ENCODE measurements at regions of chr9 and their contacts with region 1.

Region 1: GRCh38 chr9:26746357-26747072 is 146.1 kb downstream of the CAAP1 start:
- DNase-seq: no peak
- ATAC-seq: peak; percentile 66

Region 2: GRCh38 chr9:26946753-26947727 is 200.5 kb after region 1 on chr9 and contains the start of gene PLAA:
- intact Hi-C with region 1: no loop called
- DNase-seq: peak; percentile 91 to 92
- ATAC-seq: peak; percentile 99
- total RNA-seq, gene PLAA: 26.8 to 28.8 TPM

Region 3: DNA sequence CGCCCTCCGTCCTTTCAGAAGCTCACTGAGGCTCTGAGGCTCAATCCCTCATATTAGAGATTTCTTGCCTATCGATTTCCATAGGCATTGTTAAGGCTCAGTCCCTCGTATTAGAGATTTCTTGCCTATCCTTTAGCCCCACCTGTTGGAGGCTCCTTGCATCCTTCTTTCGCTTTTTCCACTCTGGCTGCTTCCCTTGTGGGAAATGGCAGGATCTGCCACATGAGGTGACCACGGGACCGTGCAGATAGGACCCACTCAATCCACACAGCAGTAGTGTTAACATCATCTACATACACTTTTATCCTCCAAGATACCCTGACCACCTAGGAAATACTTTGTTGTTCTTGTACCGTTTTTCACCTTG is 229.2 kb after region 1 on chr9:
- intact Hi-C with region 1: loop called in 1 of 2 experiments (anchors 5 kb)
- DNase-seq: peak in 1 of 2 donors; percentile 47
- ATAC-seq: peak; percentile 85